Panc1 (cell line): ENCODE measurements at regions of chr15 and their contacts with region 1.

Region 1: DNA sequence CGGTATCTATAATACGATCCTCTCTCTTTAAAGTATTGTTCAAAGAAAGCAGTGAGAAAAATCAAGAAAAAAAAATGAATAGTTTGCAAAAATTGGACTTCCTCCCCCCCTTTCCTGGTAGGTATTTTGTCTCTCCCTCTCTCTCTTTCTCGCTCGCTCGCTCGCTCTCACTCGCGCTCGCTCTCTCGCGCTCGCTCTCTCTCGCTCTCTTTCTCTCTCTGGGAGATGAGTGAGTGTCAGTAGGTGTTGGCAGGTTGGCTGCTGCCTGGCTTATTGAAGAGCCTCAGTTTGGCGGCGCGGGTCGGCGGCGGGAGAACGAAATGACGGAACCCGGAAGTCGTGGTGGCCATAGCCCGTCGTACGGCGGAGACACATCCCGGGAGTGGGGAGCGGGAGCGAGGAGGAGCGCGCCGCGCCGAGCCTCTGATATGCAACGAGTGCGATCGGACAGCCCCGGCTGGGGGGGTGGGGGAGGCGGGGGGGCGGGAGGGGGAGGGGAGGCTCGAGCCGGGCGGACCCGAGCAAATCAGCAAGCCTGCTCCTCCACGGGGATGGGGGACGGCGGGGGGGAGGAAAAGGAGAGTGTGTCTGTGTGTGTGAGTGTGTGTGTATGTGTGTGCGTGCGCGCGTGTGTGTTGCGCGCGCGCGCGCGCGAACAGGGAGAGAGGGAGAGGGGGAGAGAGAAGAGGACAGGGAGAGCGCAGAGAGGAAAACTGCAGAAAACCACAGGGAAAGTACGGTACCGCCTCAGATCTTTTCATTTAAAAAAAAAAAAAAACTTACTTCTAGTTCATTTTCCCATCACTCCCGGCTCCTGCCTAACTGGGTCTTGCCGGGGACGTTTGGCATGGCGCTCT is at the start of gene MEIS2:
- DNase-seq: peak; percentile 67
- ATAC-seq: peak; percentile 65
- H3K4me3 ChIP-seq: peak within 1 kb of the TSS; percentile 66 to 92
- H3K27ac ChIP-seq: peak within 1 kb of the TSS; percentile 82
- H3K4me1 ChIP-seq: peaks cover 17% of the 10 kb centered on the region
- H3K27me3 ChIP-seq: peaks cover 5% of the 10 kb centered on the region; the same call in 1 of the 2 replicates
- CTCF ChIP-seq: no peak
- total RNA-seq, gene MEIS2: 9.3 TPM

Region 2: GRCh38 chr15:36883713-36884517 is 216.4 kb before region 1 on chr15:
- CTCF ChIA-PET with region 1: no interaction called
- POLR2A ChIA-PET with region 1: no interaction called
- in situ Hi-C with region 1: no loop called
- intact Hi-C with region 1: loop called (anchors 2 kb)
- DNase-seq: peak; percentile 30
- ATAC-seq: peak; percentile 91
- H3K4me3 ChIP-seq: no peak overlapping the region
- H3K27ac ChIP-seq: no peak overlapping the region
- H3K4me1 ChIP-seq: peaks cover 5% of the 10 kb centered on the region; the same call in 1 of the 2 replicates
- H3K27me3 ChIP-seq: peaks cover 24% of the 10 kb centered on the region
- CTCF ChIP-seq: peak; percentile 91

Region 3: DNA sequence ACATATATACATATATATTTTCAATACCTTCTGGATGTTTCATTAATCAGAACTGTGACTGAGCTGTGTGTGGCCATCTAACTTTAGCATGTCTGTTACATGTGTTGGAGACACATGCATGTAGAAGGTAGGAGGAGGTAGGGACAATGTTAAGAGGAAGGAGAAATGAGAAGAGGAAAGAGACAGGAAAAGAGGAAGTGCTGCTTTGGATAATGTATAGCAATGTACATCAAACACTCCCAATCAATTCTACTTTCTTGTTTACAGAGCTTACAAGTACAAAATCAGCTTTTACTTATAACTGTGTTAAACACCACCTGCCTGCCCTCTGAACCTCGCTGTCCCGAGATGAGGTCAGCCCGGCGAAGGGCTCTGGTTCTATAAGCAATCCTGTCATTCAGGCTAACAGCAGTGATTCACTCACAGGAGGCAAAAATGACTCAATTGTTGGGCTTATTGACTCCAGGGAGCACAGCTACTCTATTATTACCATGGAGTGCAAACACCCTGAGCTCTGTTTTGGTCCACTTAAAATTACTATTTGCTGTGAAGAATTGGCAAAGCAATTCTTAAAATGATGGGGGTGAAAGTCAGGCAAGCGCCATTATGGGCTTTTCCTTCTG is 188.9 kb before region 1 on chr15:
- CTCF ChIA-PET with region 1: no interaction called
- POLR2A ChIA-PET with region 1: interaction called, 6 read pairs
- in situ Hi-C with region 1: loop called (anchors 25 kb)
- intact Hi-C with region 1: no loop called
- DNase-seq: peak; percentile 18
- ATAC-seq: peak; percentile 66; the same call in 1 of the 2 replicates
- H3K4me3 ChIP-seq: no peak overlapping the region
- H3K27ac ChIP-seq: peak overlapping the region; percentile 10; the same call in 1 of the 2 replicates
- H3K4me1 ChIP-seq: peaks cover 5% of the 10 kb centered on the region; the same call in 1 of the 2 replicates
- H3K27me3 ChIP-seq: no peaks in the 10 kb centered on the region
- CTCF ChIP-seq: no peak

Region 4: DNA sequence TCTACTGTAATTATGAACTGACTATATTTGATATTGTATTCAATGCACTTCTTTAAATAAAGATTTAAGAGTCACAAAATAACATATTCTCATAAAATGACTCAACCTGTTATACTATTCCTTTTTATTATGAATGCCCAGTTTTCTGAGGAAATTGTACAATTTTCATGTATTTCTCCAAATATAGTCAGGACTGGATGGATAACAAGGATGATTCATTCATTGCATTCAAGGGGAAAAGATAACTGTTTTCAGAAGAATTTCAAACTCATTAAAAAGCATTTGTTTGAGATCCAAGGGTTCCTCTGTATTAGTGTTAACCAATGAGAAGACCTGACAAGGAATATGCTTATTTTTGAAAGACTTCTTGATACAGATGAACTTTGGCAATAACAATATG is 163.7 kb before region 1 on chr15:
- CTCF ChIA-PET with region 1: no interaction called
- POLR2A ChIA-PET with region 1: interaction called, 15 read pairs
- in situ Hi-C with region 1: no loop called
- intact Hi-C with region 1: no loop called
- DNase-seq: no peak
- ATAC-seq: no peak
- H3K4me3 ChIP-seq: no peak overlapping the region
- H3K27ac ChIP-seq: no peak overlapping the region
- H3K4me1 ChIP-seq: no peaks in the 10 kb centered on the region
- H3K27me3 ChIP-seq: no peaks in the 10 kb centered on the region
- CTCF ChIP-seq: no peak